HAP-1 (cell line): ENCODE measurements at regions of chr1 and their contacts with region 1.

Region 1: GRCh38 chr1:76154206-76154956 is 79.8 kb downstream of the ST6GALNAC3 start:
- DNase-seq: peak; percentile 48 to 78
- H3K4me3 ChIP-seq: no peak overlapping the region
- H3K4me1 ChIP-seq: no peaks in the 10 kb centered on the region; the same call in 1 of the 2 replicates
- H3K27me3 ChIP-seq: peaks cover 4% of the 10 kb centered on the region

Region 2: GRCh38 chr1:77126307-77126706 is 971.9 kb after region 1 on chr1:
- in situ Hi-C with region 1: loop called (anchors 25 kb)
- DNase-seq: peak; percentile 13 to 23
- H3K4me3 ChIP-seq: no peak overlapping the region
- H3K4me1 ChIP-seq: no peaks in the 10 kb centered on the region
- H3K27me3 ChIP-seq: no peaks in the 10 kb centered on the region

Region 3: GRCh38 chr1:77193951-77194350 is 1039.6 kb after region 1 on chr1:
- in situ Hi-C with region 1: no loop called
- DNase-seq: no peak
- H3K4me3 ChIP-seq: no peak overlapping the region
- H3K4me1 ChIP-seq: no peaks in the 10 kb centered on the region
- H3K27me3 ChIP-seq: no peaks in the 10 kb centered on the region